T-cell (primary cell): ENCODE measurements at regions of chr5 and their contacts with region 1.

Region 1: DNA sequence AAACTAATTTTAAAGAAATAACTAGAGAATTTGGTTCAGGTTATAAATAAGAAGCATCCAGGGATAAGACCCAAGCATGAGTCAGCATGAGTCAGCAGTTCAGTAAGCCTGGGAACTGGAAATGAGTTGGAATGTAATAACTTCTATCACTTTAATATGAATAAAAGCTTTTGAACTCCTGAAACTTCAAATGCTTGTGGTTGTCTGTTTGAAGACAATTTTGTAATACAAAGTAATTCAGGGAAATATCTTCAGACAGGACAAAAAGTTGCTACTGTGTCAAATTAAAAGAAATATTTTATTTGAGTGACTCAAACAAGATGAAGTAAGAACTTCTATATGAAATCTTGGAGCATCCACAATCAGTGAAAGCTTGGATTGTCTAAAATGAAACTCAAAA is 331.2 kb upstream of the DAB2 start:
- DNase-seq: no peak
- ATAC-seq: no peak
- H3K4me3 ChIP-seq: no peak overlapping the region
- H3K4me3 Mint-ChIP-seq: no peak overlapping the region
- H3K27ac ChIP-seq: no peak overlapping the region
- H3K27ac Mint-ChIP-seq: no peak overlapping the region
- H3K4me1 ChIP-seq: no peaks in the 10 kb centered on the region
- H3K4me1 Mint-ChIP-seq: no peaks in the 10 kb centered on the region
- H3K27me3 ChIP-seq: no peaks in the 10 kb centered on the region
- H3K27me3 Mint-ChIP-seq: peaks cover 4 to 8% of the 10 kb centered on the region in 2 donors

Region 2: DNA sequence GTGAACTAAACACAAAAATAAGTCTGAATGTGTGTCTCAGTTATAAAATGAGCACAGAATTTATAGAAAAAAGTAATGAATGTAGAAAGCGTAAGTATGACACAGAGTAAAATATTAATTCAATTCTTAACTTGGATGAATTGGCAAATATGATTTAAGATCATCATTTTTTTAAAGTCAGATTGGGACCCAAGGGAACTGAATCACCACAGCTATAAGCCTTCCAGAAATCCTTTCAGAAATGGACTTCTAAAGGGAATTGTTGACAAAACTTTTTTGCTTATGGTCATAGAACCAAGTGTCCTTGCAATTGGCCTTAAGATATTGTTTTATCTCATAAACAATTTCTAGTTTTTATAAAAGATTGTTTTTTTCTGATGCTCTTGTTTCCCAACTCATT is 163.9 kb after region 1 on chr5:
- CTCF ChIA-PET with region 1: interaction called in 1 of 2 experiments, 11 read pairs
- POLR2A ChIA-PET with region 1: no interaction called
- DNase-seq: no peak
- ATAC-seq: no peak
- H3K4me3 ChIP-seq: no peak overlapping the region
- H3K4me3 Mint-ChIP-seq: no peak overlapping the region
- H3K27ac ChIP-seq: no peak overlapping the region
- H3K27ac Mint-ChIP-seq: no peak overlapping the region
- H3K4me1 ChIP-seq: no peaks in the 10 kb centered on the region
- H3K4me1 Mint-ChIP-seq: no peaks in the 10 kb centered on the region
- H3K27me3 ChIP-seq: no peaks in the 10 kb centered on the region
- H3K27me3 Mint-ChIP-seq: peaks cover 0 to 4% of the 10 kb centered on the region in 2 donors